Activated T-helper 1 cell treated with anti-CD3 and anti-CD28 coated beads, Interleukin-12 subunit alpha, Interleukin-12 subunit beta, Interleukin-2, Interleukin-4 antibody, amounts not matched to agents 30 ng/mL and 10 ng/mL and 1 ng/mL, durations not matched to agents 14 hours and 24 hours and 36 hours (primary cell): ENCODE measurements at regions of chr9 and their contacts with region 1.

Region 1: DNA sequence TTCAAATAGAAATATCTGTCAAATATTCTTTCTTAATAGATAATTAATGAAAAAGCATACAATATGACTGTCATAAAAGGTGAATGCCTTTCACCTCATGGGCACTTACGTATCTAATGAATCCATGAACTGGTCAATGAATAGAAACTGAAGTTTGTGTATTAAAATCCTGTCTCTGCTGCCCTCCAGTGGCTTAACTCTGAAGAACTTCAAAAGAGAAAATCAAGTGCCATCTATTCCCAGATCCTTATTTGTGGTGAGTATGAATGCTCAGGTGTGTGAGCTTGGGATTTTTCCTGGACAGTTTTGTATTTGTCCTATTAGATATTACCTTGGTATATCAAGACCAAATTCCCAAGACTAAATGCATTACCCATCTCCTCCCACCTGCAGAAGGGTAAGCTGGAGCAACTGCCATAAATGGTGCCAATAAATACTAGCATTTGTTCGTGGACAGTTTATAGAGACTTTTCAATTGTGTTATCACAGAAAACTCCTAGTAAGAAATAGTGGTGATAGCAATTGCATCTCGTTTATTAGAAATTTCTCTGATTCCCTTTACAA is 44.0 kb upstream of the SVEP1 start:
- DNase-seq: no peak
- H3K4me3 Mint-ChIP-seq: no peak overlapping the region
- H3K27ac Mint-ChIP-seq: no peak overlapping the region
- H3K4me1 Mint-ChIP-seq: peaks cover 11% of the 10 kb centered on the region
- H3K27me3 Mint-ChIP-seq: peaks cover 5% of the 10 kb centered on the region

Region 2: DNA sequence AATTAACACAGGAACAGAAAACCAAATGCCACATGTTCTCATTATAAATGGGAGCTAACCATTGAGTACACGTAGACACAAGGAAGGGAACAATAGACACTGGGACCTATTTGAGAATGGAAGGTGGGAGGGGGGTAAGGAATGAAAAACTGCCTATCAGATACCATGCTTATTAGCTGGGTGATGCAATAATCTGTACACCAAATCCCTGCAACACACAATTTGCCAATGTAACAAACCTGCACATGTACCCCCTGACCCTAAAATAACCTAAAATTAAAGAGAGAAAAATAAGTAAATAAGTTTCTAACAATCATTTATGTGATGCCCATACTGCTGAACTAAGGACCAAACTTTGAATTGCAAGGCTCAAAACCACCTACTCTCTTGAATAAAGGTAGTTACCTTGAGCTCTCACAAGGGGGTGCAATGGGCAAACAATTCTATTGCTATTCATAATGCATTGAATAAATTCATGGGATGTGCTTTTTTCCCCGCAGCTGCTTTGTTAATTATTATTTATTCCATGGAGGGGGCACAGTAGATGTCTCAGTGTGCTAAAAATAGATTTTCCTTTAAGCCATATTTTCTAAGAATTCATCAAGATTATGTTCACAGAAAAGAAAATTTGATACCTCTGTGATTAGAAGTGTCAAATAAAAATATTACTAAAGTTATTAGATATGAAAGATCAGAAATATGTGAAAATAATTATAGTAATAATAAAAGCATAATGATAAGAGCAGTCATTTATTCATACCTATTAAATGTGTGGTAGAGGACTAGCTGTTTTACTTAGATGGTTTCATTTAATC is 1049.3 kb before region 1 on chr9:
- intact Hi-C with region 1: loop called (anchors 5 kb)
- DNase-seq: peak; percentile 14
- H3K4me3 Mint-ChIP-seq: no peak overlapping the region
- H3K27ac Mint-ChIP-seq: no peak overlapping the region
- H3K4me1 Mint-ChIP-seq: no peaks in the 10 kb centered on the region
- H3K27me3 Mint-ChIP-seq: peaks cover 19% of the 10 kb centered on the region

Region 3: DNA sequence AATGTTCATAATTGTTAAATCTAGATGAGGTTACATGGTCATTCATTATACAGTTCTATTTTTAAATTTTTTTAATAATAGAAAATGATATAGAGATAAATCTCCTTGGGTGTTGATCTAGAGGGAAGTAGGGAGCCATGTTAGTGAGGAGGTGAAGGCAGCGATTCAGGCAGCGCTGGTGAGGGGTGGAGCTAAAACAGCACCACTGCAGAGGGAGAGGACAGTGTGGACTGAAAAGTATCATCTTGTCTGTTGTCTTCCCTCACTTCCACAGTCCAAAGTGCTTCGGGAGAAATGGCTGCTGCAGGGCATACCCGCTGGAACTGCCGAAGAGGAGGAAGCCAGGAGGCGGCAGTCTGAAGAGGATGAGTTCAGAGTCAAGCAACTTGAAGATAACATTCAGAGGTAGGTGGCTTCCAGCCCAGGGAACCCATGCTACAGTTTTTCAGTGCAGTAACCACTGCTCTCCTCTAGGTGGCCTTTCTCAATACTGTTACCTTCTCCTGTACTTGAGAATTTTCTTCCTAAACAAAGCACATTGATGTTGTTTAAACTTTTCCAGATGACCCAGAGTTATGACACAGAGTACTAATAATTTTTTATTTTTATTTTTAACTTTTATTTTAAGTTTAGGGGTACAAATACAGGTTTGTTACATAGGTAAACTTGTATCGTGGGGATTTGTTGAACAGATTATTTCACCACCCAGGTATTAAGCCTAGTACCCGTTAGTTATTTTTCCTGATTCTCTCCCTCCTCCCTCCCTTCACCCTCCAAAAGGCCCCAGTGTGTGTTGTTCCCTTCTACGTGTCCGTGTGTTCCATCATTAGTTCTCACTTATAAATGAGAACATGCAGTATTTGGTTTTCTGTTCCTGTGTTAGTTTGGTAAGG is 743.0 kb before region 1 on chr9:
- intact Hi-C with region 1: loop called (anchors 10 kb)
- DNase-seq: no peak
- H3K4me3 Mint-ChIP-seq: peak overlapping the region; percentile 74
- H3K27ac Mint-ChIP-seq: peak overlapping the region; percentile 49
- H3K4me1 Mint-ChIP-seq: peaks cover 43% of the 10 kb centered on the region
- H3K27me3 Mint-ChIP-seq: no peaks in the 10 kb centered on the region

Region 4: GRCh38 chr9:110183208-110184145 is 440.1 kb before region 1 on chr9:
- intact Hi-C with region 1: loop called (anchors 1 kb)
- DNase-seq: peak; percentile 44
- H3K4me3 Mint-ChIP-seq: no peak overlapping the region
- H3K27ac Mint-ChIP-seq: no peak overlapping the region
- H3K4me1 Mint-ChIP-seq: peaks cover 20% of the 10 kb centered on the region
- H3K27me3 Mint-ChIP-seq: peaks cover 3% of the 10 kb centered on the region

Region 5: DNA sequence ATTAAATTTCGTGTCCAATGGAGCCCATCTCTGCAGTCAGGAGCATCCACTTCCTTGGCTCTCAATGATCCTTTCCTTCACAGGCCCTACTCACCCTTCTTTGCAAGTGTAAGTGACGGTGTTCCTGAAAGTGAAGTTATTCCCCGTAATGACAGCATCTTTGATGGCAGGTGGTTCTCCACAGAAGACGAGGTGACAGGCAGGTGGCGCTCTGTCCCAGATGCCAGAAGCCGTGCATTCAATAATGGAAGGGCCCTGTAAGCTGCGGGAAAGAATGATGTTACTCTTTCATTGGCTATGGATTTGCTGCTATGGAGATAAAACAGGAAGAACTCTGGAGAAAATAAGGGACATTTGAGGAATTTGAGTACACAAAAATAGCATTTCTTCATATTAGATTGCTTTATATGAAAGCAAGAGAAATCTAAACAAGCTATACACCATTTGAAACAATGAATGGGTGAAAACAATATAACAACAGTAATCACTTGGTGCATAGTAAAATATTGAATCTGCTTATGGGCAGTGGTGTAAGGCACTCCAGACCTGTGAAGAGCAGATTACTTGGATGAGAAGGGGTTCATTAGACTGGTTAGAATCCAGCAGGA is 195.9 kb before region 1 on chr9:
- intact Hi-C with region 1: loop called (anchors 2 kb)
- DNase-seq: no peak
- H3K4me3 Mint-ChIP-seq: no peak overlapping the region
- H3K27ac Mint-ChIP-seq: no peak overlapping the region
- H3K4me1 Mint-ChIP-seq: no peaks in the 10 kb centered on the region
- H3K27me3 Mint-ChIP-seq: no peaks in the 10 kb centered on the region

Region 6: DNA sequence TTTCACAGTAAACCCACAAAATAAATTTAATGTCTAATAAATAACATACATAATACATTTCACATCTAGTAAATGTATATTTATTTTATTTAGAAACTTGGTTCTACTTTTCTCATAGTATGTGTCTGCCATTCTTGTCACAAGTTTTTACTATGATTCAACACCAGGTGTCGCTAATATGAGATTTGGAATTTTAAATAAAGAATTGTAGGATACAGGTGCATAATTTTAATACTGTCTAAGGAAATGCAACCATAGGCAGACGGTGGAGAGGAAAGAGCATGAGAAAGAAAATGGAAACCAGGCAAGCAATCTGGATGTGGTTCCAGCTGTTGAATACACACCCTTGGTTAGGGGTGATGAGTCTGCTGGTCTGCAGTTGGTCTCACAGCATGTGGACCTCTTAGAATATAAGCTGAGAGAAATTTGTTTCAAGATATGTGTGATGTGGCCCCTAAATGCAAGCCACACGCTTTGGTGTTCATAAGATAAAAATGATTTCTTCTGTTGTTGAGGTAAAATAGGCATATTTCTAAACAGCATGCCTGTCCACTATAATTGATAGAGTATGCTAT is 171.2 kb before region 1 on chr9:
- intact Hi-C with region 1: loop called (anchors 1 kb)
- DNase-seq: no peak
- H3K4me3 Mint-ChIP-seq: no peak overlapping the region
- H3K27ac Mint-ChIP-seq: no peak overlapping the region
- H3K4me1 Mint-ChIP-seq: no peaks in the 10 kb centered on the region
- H3K27me3 Mint-ChIP-seq: no peaks in the 10 kb centered on the region